Activated CD4-positive, alpha-beta T cell treated with anti-CD3 and anti-CD28 coated beads, Interleukin-2, amount 10 ng/mL, durations not matched to agents 24 days and 14 days (primary cell): ENCODE measurements at regions of chr14 and their contacts with region 1.

Region 1: GRCh38 chr14:33432407-33433023 is 493.8 kb downstream of the NPAS3 start:
- DNase-seq: no peak
- H3K4me3 Mint-ChIP-seq: no peak overlapping the region
- H3K27ac Mint-ChIP-seq: no peak overlapping the region
- H3K4me1 Mint-ChIP-seq: peaks cover 9% of the 10 kb centered on the region
- H3K27me3 Mint-ChIP-seq: no peaks in the 10 kb centered on the region

Region 2: GRCh38 chr14:34322940-34323418 is 890.5 kb after region 1 on chr14:
- intact Hi-C with region 1: loop called (anchors 5 kb)
- DNase-seq: peak; percentile 90
- H3K4me3 Mint-ChIP-seq: no peak overlapping the region
- H3K27ac Mint-ChIP-seq: no peak overlapping the region
- H3K4me1 Mint-ChIP-seq: no peaks in the 10 kb centered on the region
- H3K27me3 Mint-ChIP-seq: peaks cover 6% of the 10 kb centered on the region